ENCODE measurements at regions of chr1 and their contacts with region 1.

Region 1: DNA sequence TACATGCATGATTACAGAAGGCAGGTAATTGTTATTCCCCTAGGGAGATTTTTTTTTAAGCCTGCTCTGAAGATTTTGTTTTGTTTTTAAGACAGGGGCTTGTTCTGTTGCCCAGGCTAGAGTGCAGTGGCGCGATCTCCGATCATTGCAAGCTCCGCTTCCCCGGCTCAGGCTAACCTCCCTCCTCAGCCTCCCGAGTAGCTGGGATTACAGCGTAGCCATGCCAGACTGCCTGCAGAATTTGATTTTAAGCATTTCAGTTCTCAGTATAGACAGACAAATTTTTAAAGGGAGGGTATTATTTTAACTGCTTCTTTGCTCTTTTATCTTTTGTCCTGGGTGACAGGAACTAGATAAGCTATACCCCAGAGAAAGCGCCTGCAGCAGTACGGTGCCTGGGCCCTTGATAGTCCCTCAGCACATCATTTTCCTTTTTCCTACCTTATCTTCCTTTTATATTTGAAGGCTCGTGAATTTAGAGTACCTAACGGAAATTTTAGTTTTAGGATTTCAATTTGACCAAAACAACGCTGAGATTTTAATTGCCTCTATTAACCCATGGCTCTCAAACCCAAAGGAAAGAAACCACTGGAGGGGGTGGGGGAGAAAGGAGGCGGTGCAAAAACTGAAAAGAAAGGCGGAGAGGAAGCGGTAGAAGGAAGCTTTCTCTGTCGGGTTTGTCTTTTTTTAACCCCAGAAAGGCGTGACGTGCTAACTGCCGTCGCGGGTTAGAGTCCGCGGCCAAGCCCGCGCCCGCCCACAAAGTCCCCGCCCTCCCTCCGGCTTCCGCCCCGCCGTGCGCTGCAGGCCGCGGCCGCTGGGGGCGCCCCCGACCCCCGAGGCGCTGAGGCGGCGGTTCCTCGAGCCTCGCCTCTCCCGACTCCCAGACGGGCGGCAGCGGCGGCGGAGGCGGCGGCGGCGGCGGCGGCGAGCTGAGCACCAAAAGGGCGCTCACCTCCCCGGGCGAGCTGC is at the start of gene EEIG2:
- DNase-seq: peak; percentile 93
- H3K4me3 Mint-ChIP-seq: peak within 1 kb of the TSS; percentile 88
- H3K27ac Mint-ChIP-seq: peak within 1 kb of the TSS; percentile 65
- H3K4me1 Mint-ChIP-seq: peaks cover 36% of the 10 kb centered on the region
- H3K27me3 Mint-ChIP-seq: no peaks in the 10 kb centered on the region
- total RNA-seq, gene EEIG2: 8.4 to 8.7 TPM

Region 2: GRCh38 chr1:108199781-108200570 is 359.5 kb before region 1 on chr1 and contains the start of gene SLC25A24:
- CTCF ChIA-PET with region 1: interaction called, 10 read pairs
- POLR2A ChIA-PET with region 1: no interaction called
- intact Hi-C with region 1: loop called (anchors 5 kb)
- DNase-seq: peak; percentile 83
- H3K4me3 Mint-ChIP-seq: peak within 1 kb of the TSS; percentile 85
- H3K27ac Mint-ChIP-seq: peak within 1 kb of the TSS; percentile 61
- H3K4me1 Mint-ChIP-seq: peaks cover 29% of the 10 kb centered on the region
- H3K27me3 Mint-ChIP-seq: no peaks in the 10 kb centered on the region
- total RNA-seq, gene SLC25A24: 18.1 to 19.4 TPM

Region 3: DNA sequence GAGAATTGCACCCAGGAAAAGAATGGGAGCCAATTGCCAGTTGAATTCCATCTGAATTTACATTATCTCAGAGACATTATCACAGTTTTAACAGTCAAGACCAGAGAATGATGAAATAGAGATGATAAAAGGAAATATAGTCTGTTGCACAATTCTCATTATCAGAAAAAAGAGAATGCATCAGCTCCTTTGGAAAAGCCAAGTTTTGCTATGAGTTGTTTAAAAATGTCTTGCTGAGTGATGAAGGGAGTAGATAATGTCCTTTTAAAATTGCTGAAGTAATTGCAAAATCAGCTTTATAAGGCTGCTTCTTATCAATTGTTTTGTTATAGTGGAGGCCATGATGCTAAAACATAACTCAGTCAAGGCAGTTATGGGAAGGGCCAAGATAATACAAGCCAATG is 37.5 kb before region 1 on chr1:
- CTCF ChIA-PET with region 1: interaction called, 22 read pairs
- POLR2A ChIA-PET with region 1: interaction called, 3 read pairs
- intact Hi-C with region 1: no loop called
- DNase-seq: no peak
- H3K4me3 Mint-ChIP-seq: no peak overlapping the region
- H3K27ac Mint-ChIP-seq: no peak overlapping the region
- H3K4me1 Mint-ChIP-seq: no peaks in the 10 kb centered on the region
- H3K27me3 Mint-ChIP-seq: no peaks in the 10 kb centered on the region

Region 4: GRCh38 chr1:108590957-108591356 is 31.5 kb after region 1 on chr1:
- CTCF ChIA-PET with region 1: interaction called, 9 read pairs
- POLR2A ChIA-PET with region 1: no interaction called
- intact Hi-C with region 1: loop called (anchors 1 kb)
- DNase-seq: no peak
- H3K4me3 Mint-ChIP-seq: no peak overlapping the region
- H3K27ac Mint-ChIP-seq: no peak overlapping the region
- H3K4me1 Mint-ChIP-seq: peaks cover 44% of the 10 kb centered on the region
- H3K27me3 Mint-ChIP-seq: no peaks in the 10 kb centered on the region

Region 5: DNA sequence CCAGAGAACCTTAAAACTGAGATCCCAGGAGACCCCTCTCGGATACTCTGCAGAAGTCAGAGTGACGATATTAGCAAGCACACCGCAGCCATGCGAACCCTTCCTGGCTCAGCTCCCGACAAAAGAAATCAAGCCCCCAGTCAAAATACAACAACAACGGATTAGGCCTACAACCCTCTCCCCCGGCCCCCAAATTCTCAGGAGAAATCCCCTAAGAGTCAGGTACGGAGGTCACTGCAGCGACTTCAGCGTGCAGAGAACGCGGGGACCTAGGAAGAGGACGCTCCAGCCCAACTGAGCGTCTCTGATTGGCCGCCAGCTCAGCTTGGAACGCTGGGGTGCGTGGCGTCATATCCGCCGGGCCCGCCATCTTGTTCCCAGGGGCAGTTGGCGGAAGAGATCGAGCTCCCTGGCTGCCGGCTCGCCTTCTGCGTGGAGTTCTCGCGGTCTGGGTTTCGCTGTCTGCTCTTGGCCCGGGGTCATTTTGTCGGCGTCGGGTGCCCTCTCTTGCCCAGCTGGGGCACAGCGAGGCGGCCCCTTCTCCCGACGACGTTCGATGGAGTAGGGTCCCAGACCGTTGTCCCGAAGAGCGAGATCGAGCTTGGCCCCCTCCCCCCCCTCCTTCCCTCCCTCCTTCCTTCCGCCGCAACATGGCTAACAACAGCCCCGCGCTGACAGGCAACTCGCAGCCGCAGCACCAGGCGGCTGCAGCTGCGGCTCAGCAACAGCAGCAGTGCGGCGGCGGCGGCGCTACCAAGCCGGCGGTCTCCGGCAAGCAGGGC is 132.6 kb after region 1 on chr1 and contains the start of gene PRPF38B:
- CTCF ChIA-PET with region 1: interaction called, 15 read pairs
- POLR2A ChIA-PET with region 1: interaction called, 13 read pairs
- intact Hi-C with region 1: loop called (anchors 5 kb)
- DNase-seq: peak; percentile 97
- H3K4me3 Mint-ChIP-seq: peak within 1 kb of the TSS; percentile 96
- H3K27ac Mint-ChIP-seq: peak within 1 kb of the TSS; percentile 99
- H3K4me1 Mint-ChIP-seq: peaks cover 37% of the 10 kb centered on the region
- H3K27me3 Mint-ChIP-seq: no peaks in the 10 kb centered on the region
- total RNA-seq, gene PRPF38B: 57.0 to 63.5 TPM